A549 (cell line): ENCODE measurements at regions of chr17 and their contacts with region 1.

Region 1: GRCh38 chr17:76278952-76279741 is 14.0 kb downstream of the UBALD2 start:
- DNase-seq: peak; percentile 78 to 96
- ATAC-seq: peak; percentile 75 to 97
- H3K4me3 ChIP-seq: no peak overlapping the region
- H3K27ac ChIP-seq: peak overlapping the region; percentile 3; a peak in 2 of 6 replicates
- H3K4me1 ChIP-seq: peaks cover 10% of the 10 kb centered on the region
- CTCF ChIP-seq: peak; percentile 100
- EP300 ChIP-seq: no peak
- POLR2A ChIP-seq: no peak
- RAD21 ChIP-seq: peak; percentile 99

Region 2: DNA sequence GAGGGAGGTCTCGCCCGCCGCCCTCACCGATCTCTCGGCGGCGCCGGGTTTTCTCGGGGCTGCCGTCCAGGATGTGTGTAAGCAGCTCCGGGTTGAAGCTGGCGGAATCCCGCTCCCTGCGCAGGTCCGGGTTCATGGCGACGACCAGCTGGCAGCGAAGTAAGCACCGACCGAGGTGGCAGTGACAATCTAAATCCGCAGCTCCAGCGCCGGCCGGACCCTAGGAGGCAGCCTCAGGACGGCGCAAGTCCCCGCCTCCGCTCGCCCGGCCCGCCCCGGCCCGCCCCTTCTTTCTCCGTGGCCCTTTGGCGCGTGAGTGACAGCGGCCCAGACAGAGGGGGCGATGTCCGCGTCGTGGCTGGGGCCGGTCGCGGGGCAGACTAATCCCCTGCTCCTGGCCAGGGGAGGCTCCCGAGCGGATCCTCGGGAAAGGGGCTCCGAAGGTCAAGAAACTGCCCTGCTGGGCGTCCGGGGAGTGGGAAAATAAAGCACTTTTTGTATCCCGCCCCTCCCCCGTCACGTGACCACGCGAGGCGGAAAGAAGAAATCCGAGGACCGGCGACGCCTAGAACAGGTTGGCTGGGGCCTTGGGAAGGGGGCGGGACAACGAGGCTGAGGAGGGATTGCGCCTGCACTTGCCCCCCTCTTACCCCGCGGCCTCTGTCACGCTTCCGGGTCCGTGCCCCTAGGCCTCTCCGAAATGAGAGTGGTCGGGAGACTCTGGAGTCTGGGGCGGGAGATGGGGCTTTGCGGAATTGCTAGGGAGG is 300.0 kb before region 1 on chr17 and contains the starts of genes ACOX1 and TEN1:
- CTCF ChIA-PET with region 1: interaction called, 10 read pairs
- POLR2A ChIA-PET with region 1: no interaction called
- DNase-seq: peak; percentile 93 to 99
- ATAC-seq: peak; percentile 95 to 97
- H3K4me3 ChIP-seq: peak within 1 kb of the TSS; percentile 84
- H3K27ac ChIP-seq: peak within 1 kb of the TSS; percentile 90 to 93
- H3K4me1 ChIP-seq: peaks cover 43% of the 10 kb centered on the region
- CTCF ChIP-seq: peak; percentile 21; the same call in 2 of the 3 replicates
- EP300 ChIP-seq: no peak
- POLR2A ChIP-seq: peak; percentile 92
- RAD21 ChIP-seq: no peak
- polyA plus RNA-seq, gene ACOX1: 31.1 and 34.3 TPM in 2 replicates
- polyA plus RNA-seq, gene TEN1: 11.8 TPM in 2 replicates

Region 3: GRCh38 chr17:76027159-76027839 is 251.8 kb before region 1 on chr17 and contains the start of gene EVPL:
- CTCF ChIA-PET with region 1: interaction called, 37 read pairs
- POLR2A ChIA-PET with region 1: no interaction called
- DNase-seq: peak; percentile 62 to 88
- ATAC-seq: peak; percentile 87 to 94
- H3K4me3 ChIP-seq: peak within 1 kb of the TSS; percentile 74
- H3K27ac ChIP-seq: peak within 1 kb of the TSS; percentile 93
- H3K4me1 ChIP-seq: peaks cover 29% of the 10 kb centered on the region
- CTCF ChIP-seq: no peak
- EP300 ChIP-seq: no peak
- POLR2A ChIP-seq: peak; percentile 70
- RAD21 ChIP-seq: no peak
- polyA plus RNA-seq, gene EVPL: 4.0 and 4.1 TPM in 2 replicates

Region 4: DNA sequence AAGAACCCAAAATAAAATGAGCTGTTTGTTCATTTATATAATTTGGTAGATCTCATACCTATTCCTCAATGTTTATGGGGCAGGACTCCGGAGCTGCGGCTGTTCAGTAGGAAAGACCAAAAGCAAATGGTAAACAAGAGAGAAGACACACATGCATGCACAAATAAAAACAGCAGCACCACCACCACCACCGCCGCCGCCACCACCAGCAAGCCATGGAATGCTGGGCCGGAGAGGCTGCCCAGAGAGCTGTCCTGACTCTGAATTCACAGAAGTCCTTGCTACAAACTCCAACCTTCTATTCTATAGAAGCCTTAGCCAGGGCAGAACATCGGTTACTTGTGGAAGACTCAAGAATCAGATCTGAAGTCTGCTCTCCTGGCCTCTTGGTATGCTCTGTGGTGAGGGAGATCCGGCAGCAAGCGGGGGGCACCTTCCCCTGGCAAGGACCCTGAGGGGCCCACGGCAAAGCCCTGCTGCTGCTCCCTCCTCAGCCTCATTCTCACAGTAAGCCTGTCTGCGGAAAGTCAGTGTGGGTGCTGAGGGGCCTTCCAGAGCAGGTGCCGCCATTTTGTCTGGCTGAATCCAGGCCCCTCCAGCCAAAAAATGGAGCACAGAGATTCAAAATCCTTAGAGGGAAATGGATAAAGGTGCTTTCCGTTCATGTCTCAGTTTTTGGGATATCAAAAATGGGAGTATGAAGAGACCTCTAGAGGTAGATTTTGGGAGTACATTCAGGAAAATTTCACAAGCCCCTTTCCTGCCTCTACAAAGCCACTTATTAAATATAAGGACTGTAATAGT is 131.7 kb before region 1 on chr17:
- CTCF ChIA-PET with region 1: interaction called, 82 read pairs
- POLR2A ChIA-PET with region 1: no interaction called
- DNase-seq: peak in 1 of 2 experiments; percentile 64
- ATAC-seq: peak in 1 of 2 experiments; percentile 61; a peak in 3 of 6 replicates
- H3K4me3 ChIP-seq: no peak overlapping the region
- H3K27ac ChIP-seq: no peak overlapping the region
- H3K4me1 ChIP-seq: no peaks in the 10 kb centered on the region
- CTCF ChIP-seq: peak; percentile 64
- EP300 ChIP-seq: no peak
- POLR2A ChIP-seq: no peak
- RAD21 ChIP-seq: peak; percentile 55 to 59

Region 5: DNA sequence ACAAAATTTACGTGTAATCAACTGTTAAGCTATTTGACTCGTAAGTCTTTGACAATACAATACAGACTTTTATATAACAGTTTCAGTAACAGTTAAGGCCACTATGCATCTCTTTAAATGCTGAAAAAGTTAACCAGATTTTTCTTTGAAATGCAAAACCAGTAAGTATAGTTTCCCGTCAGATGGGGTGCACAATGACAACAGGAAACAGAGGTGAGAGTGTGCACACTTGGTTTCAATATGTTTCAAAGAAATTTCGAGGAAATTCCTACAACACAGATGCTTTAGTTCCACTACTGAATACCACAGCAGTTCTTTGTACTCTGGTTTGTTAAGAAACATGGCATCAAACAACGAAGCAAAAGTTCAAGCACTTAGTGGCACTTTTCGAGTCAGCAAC is 87.3 kb before region 1 on chr17:
- CTCF ChIA-PET with region 1: interaction called, 40 read pairs
- POLR2A ChIA-PET with region 1: no interaction called
- DNase-seq: no peak
- ATAC-seq: no peak
- H3K4me3 ChIP-seq: no peak overlapping the region
- H3K27ac ChIP-seq: no peak overlapping the region
- H3K4me1 ChIP-seq: no peaks in the 10 kb centered on the region
- CTCF ChIP-seq: no peak
- EP300 ChIP-seq: no peak
- POLR2A ChIP-seq: no peak
- RAD21 ChIP-seq: no peak

Region 6: GRCh38 chr17:76240461-76241203 is 38.5 kb before region 1 on chr17 and contains the start of gene RNF157:
- CTCF ChIA-PET with region 1: interaction called, 164 read pairs
- POLR2A ChIA-PET with region 1: no interaction called
- DNase-seq: peak; percentile 60 to 81
- ATAC-seq: peak; percentile 87 to 91
- H3K4me3 ChIP-seq: peak within 1 kb of the TSS; percentile 54
- H3K27ac ChIP-seq: peak within 1 kb of the TSS; percentile 63 to 84
- H3K4me1 ChIP-seq: peaks cover 24% of the 10 kb centered on the region
- CTCF ChIP-seq: no peak
- EP300 ChIP-seq: no peak
- POLR2A ChIP-seq: peak; percentile 33
- RAD21 ChIP-seq: no peak
- polyA plus RNA-seq, gene RNF157: 7.2 and 8.2 TPM in 2 replicates

Region 7: GRCh38 chr17:76331083-76331482 is 51.9 kb after region 1 on chr17:
- CTCF ChIA-PET with region 1: interaction called, 20 read pairs
- POLR2A ChIA-PET with region 1: no interaction called
- DNase-seq: no peak
- ATAC-seq: no peak
- H3K4me3 ChIP-seq: no peak overlapping the region
- H3K27ac ChIP-seq: no peak overlapping the region
- H3K4me1 ChIP-seq: no peaks in the 10 kb centered on the region
- CTCF ChIP-seq: no peak
- EP300 ChIP-seq: no peak
- POLR2A ChIP-seq: no peak
- RAD21 ChIP-seq: no peak